Natural killer cell (primary cell): ENCODE measurements at regions of chr3 and their contacts with region 1.

Region 1: DNA sequence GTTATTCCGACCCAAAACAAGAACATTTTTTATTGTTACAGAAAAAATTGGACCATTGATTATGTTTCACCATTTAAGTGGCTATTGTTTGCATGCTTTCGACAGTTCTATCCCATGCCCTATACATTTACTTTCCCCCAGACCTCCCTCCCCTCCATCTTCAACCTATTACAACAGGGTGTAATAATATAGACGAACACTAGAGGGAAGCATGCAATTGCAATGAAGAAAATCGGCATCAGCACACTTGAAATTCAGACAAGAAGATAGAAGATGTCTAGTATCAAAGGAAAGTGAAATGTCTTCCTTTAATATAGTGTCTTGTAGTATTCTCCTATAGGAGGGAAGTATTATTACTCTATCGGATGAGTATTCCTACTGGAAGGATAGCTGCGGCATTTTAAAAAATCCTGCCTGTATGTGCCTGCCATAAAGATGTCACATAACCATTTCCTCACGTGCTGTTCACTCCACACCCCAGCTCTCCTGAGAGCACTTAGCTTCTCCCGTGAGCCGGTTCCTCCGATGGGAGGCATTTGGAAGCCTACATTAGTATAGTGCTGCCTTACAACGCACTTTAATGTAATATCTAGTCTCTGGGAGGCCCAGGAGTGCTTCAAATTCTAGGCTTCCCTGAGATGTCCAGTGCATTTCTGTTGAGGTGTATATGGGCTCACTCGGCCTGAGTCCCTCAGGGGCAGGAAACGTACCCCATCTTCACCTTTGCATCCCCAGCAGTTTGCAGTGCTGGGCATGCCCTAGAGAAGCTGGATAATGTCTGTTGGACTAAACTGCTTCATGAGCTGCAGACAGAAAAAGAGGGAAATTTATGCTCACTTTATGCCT is 17.8 kb upstream of the ERICH6 start:
- DNase-seq: peak in 1 of 2 donors; percentile 84
- ATAC-seq: peak; percentile 87 to 96 (median 94)
- H3K4me3 ChIP-seq: no peak overlapping the region
- H3K4me3 Mint-ChIP-seq: no peak overlapping the region
- H3K27ac ChIP-seq: no peak overlapping the region
- H3K27ac Mint-ChIP-seq: no peak overlapping the region
- H3K4me1 ChIP-seq: peaks cover 3% of the 10 kb centered on the region
- H3K4me1 Mint-ChIP-seq: peaks cover 6 to 10% of the 10 kb centered on the region in 2 donors
- H3K27me3 ChIP-seq: no peaks in the 10 kb centered on the region
- H3K27me3 Mint-ChIP-seq: no peaks in the 10 kb centered on the region
- CTCF ChIP-seq: peak; percentile 84

Region 2: DNA sequence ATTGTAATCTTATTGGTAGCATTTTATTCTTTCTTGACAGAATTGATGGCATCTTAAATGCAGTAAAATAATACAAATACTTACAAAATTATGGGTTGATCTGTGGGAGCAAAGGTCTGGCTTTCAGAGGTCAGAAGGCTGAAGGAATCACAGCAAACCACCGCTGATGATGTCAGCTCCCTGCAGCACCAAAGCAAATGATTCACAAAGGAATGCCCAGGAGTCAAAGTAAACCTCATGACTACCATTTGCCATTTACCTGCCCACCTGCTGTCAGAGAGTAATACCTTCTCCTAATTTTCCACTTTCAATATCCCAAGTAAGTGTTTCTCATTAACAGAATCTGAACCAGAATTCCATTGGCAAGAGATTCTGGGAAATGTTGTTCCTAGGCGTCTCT is 1810.3 kb before region 1 on chr3:
- intact Hi-C with region 1: no loop called
- DNase-seq: no peak
- ATAC-seq: no peak
- H3K4me3 ChIP-seq: no peak overlapping the region
- H3K4me3 Mint-ChIP-seq: no peak overlapping the region
- H3K27ac ChIP-seq: no peak overlapping the region
- H3K27ac Mint-ChIP-seq: no peak overlapping the region
- H3K4me1 ChIP-seq: no peaks in the 10 kb centered on the region
- H3K4me1 Mint-ChIP-seq: no peaks in the 10 kb centered on the region
- H3K27me3 ChIP-seq: no peaks in the 10 kb centered on the region
- H3K27me3 Mint-ChIP-seq: peaks cover 16% of the 10 kb centered on the region in 2 donors
- CTCF ChIP-seq: no peak

Region 3: DNA sequence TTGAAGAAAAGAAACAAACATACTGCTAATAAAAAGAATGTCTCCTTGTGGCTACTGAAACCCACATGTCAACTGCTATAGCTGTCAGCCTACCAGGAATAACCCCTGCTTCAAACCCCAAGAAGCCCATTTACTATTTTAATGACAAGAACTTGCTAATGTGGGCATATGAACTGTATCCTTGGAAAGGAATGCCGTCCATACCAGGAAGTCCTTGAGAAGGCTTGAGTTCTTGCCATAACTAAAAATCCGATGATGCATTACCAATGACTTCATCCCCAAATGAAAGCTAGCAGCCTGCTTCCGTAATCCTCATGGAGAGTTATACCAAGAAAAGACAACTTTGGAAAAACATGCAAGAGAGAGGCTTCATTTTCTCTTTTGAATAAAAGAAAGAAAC is 148.9 kb after region 1 on chr3:
- intact Hi-C with region 1: loop called (anchors 1 kb)
- DNase-seq: no peak
- ATAC-seq: no peak
- H3K4me3 ChIP-seq: no peak overlapping the region
- H3K4me3 Mint-ChIP-seq: no peak overlapping the region
- H3K27ac ChIP-seq: no peak overlapping the region
- H3K27ac Mint-ChIP-seq: no peak overlapping the region
- H3K4me1 ChIP-seq: no peaks in the 10 kb centered on the region
- H3K4me1 Mint-ChIP-seq: peaks cover 0 to 2% of the 10 kb centered on the region in 2 donors
- H3K27me3 ChIP-seq: no peaks in the 10 kb centered on the region
- H3K27me3 Mint-ChIP-seq: peaks cover 9 to 15% of the 10 kb centered on the region in 2 donors
- CTCF ChIP-seq: no peak

Region 4: GRCh38 chr3:151146071-151146730 is 424.7 kb after region 1 on chr3:
- intact Hi-C with region 1: loop called (anchors 2 kb)
- DNase-seq: peak; percentile 26 to 78
- ATAC-seq: peak; percentile 78 to 88 (median 82)
- H3K4me3 ChIP-seq: no peak overlapping the region
- H3K4me3 Mint-ChIP-seq: no peak overlapping the region
- H3K27ac ChIP-seq: no peak overlapping the region
- H3K27ac Mint-ChIP-seq: peak overlapping the region in 1 of 2 donors; percentile 60
- H3K4me1 ChIP-seq: peaks cover 12% of the 10 kb centered on the region
- H3K4me1 Mint-ChIP-seq: no peaks in the 10 kb centered on the region
- H3K27me3 ChIP-seq: no peaks in the 10 kb centered on the region
- H3K27me3 Mint-ChIP-seq: peaks cover 0 to 5% of the 10 kb centered on the region in 2 donors
- CTCF ChIP-seq: peak; percentile 80